Dorsolateral prefrontal cortex (tissue), 120 donors: ENCODE measurements at regions of chr2 and their contacts with region 1.

Region 1: GRCh38 chr2:38602732-38603401 is at the start of gene HNRNPLL:
- DNase-seq: peak; percentile 92 to 98 (median 96)
- H3K4me3 ChIP-seq: peak within 1 kb of the TSS; percentile 69 to 99 (median 91)
- H3K27ac ChIP-seq: peak within 1 kb of the TSS; percentile 67 to 99 (median 96)
- H3K27me3 ChIP-seq: no peaks in the 10 kb centered on the region
- CTCF ChIP-seq: peak in 13 of 56 donors; percentile 11 to 30 (median 22)
- total RNA-seq, gene HNRNPLL: 43.5 to 94.0 (median 69.3) TPM

Region 2: GRCh38 chr2:37083873-37084794 is 1518.7 kb before region 1 on chr2 and contains the starts of genes GPATCH11 and HEATR5B:
- intact Hi-C with region 1: loop called in 1 of 2 experiments (anchors 10 kb)
- DNase-seq: peak; percentile 90 to 97 (median 94)
- H3K4me3 ChIP-seq: peak within 1 kb of the TSS; percentile 61 to 100 (median 91)
- H3K27ac ChIP-seq: peak within 1 kb of the TSS in 58 of 59 donors; percentile 4 to 93 (median 78)
- H3K27me3 ChIP-seq: no peaks in the 10 kb centered on the region
- CTCF ChIP-seq: peak in 16 of 56 donors; percentile 3 to 36 (median 26)
- total RNA-seq, gene GPATCH11: 11.3 to 24.1 (median 17.3) TPM
- total RNA-seq, gene HEATR5B: 25.4 to 49.0 (median 39.5) TPM

Region 3: DNA sequence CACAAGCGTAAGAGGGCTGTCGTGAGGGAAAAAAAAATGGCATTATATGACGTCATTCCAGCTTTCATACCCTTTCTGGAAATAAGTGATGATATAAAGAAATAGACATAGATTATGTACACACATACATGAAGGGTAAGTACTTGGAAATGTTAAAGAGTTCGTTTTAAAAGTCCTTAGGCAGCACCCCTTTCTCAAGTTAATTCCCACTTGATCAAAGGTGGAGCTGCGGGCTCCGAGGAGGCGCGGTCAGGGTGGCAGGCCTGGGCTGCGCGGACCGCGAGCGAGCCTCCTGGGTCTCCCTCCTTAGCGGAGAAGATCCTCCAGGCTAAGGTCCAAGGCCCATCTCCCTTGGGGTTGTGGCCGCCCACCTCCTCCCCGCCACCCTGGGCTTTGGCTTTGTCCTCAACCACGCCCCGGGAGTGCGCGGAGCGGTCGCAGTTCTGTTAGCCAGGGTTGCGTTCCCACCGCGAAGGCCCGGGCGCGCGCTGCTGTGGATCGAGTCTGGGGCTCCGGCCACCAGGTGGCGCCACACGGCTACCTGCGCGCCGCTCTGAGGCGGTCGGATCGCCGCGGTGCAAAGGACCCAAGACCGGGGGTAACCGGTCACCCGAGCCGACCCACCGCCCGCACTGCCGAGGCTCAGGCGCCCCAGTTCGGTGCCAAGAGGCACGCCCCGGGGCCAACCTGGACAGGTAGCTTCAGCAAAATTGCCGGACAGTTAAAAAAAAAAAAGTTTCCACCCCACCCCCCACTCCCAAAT is 66.9 kb before region 1 on chr2:
- intact Hi-C with region 1: loop called (anchors 5 to 10 kb)
- DNase-seq: peak; percentile 59 to 83 (median 74)
- H3K4me3 ChIP-seq: peak overlapping the region; percentile 28 to 70 (median 58)
- H3K27ac ChIP-seq: peak overlapping the region in 17 of 59 donors; percentile 9 to 78 (median 44)
- H3K27me3 ChIP-seq: peaks cover 0 to 21% (median 0%) of the 10 kb centered on the region in 45 donors
- CTCF ChIP-seq: peak; percentile 55 to 98 (median 89)

Region 4: GRCh38 chr2:38676681-38677080 is 73.8 kb after region 1 on chr2:
- intact Hi-C with region 1: no loop called
- DNase-seq: no peak
- H3K4me3 ChIP-seq: no peak overlapping the region
- H3K27ac ChIP-seq: no peak overlapping the region
- H3K27me3 ChIP-seq: no peaks in the 10 kb centered on the region
- CTCF ChIP-seq: no peak

Region 5: DNA sequence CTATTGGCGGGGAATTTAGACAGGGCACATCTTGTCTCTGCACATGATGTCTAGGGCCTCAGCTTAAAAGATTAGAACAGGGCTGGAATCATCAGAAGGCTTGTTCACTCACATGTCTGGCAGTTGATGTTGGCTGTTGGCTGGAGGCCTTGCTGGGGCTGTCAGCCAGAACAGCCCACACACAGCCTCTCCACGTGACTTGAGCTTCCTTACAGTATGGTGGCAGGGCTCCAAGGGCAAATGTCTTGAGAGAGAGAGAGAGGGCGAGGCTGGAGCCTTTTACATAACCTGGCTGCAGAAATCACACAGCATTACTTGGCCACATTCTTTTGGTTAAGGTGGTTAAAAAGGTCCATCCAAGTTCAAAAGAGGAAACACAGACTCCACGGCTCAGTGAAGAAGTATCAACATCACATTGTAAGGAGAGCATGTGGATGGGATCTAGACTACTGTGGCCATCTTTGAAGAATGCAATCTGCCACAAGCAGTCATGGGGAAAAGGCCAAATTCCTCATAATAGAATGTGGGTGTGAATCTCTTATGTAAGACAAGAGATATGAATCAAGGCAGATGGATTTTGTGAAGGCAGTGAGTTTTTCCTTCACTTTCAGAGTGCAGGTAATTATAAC is 117.9 kb after region 1 on chr2:
- intact Hi-C with region 1: loop called in 1 of 2 experiments (anchors 5 kb)
- DNase-seq: peak in 8 of 10 donors; percentile 24 to 85 (median 50)
- H3K4me3 ChIP-seq: no peak overlapping the region
- H3K27ac ChIP-seq: peak overlapping the region in 42 of 59 donors; percentile 16 to 78 (median 58)
- H3K27me3 ChIP-seq: no peaks in the 10 kb centered on the region
- CTCF ChIP-seq: no peak

Region 6: GRCh38 chr2:38750891-38751595 is 148.2 kb after region 1 on chr2 and contains the start of gene SRSF7:
- intact Hi-C with region 1: loop called in 1 of 2 experiments (anchors 2 kb)
- DNase-seq: peak; percentile 94 to 97 (median 96)
- H3K4me3 ChIP-seq: peak within 1 kb of the TSS; percentile 53 to 99 (median 91)
- H3K27ac ChIP-seq: peak within 1 kb of the TSS; percentile 89 to 100 (median 99)
- H3K27me3 ChIP-seq: no peaks in the 10 kb centered on the region
- CTCF ChIP-seq: peak in 22 of 56 donors; percentile 1 to 49 (median 14)
- total RNA-seq, gene SRSF7: 66.9 to 135 (median 93.8) TPM

Region 7: GRCh38 chr2:38863378-38863695 is 260.5 kb after region 1 on chr2:
- intact Hi-C with region 1: no loop called
- DNase-seq: no peak
- H3K4me3 ChIP-seq: no peak overlapping the region
- H3K27ac ChIP-seq: no peak overlapping the region
- H3K27me3 ChIP-seq: no peaks in the 10 kb centered on the region
- CTCF ChIP-seq: no peak